ENCODE measurements at regions of chr7 and their contacts with region 1.

Region 1: DNA sequence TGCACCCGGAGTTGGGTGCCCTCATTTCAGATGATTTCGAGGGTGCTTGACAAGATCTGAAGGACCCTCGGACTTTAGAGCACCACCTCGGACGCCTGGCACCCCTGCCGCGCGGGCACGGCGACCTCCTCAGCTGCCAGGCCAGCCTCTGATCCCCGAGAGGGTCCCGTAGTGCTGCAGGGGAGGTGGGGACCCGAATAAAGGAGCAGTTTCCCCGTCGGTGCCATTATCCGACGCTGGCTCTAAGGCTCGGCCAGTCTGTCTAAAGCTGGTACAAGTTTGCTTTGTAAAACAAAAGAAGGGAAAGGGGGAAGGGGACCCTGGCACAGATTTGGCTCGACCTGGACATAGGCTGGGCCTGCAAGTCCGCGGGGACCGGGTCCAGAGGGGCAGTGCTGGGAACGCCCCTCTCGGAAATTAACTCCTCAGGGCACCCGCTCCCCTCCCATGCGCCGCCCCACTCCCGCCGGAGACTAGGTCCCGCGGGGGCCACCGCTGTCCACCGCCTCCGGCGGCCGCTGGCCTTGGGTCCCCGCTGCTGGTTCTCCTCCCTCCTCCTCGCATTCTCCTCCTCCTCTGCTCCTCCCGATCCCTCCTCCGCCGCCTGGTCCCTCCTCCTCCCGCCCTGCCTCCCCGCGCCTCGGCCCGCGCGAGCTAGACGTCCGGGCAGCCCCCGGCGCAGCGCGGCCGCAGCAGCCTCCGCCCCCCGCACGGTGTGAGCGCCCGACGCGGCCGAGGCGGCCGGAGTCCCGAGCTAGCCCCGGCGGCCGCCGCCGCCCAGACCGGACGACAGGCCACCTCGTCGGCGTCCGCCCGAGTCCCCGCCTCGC is at the start of gene EGFR:
- DNase-seq: peak; percentile 90
- H3K4me3 Mint-ChIP-seq: peak within 1 kb of the TSS; percentile 84
- H3K27ac Mint-ChIP-seq: peak within 1 kb of the TSS; percentile 84
- H3K4me1 Mint-ChIP-seq: peaks cover 37% of the 10 kb centered on the region
- H3K27me3 Mint-ChIP-seq: no peaks in the 10 kb centered on the region
- CTCF ChIP-seq: no peak
- total RNA-seq, gene EGFR: 85.3 and 87.4 TPM in 2 replicates

Region 2: GRCh38 chr7:54932818-54933543 is 85.6 kb before region 1 on chr7:
- CTCF ChIA-PET with region 1: no interaction called
- intact Hi-C with region 1: loop called (anchors 5 kb)
- DNase-seq: peak; percentile 81
- H3K4me3 Mint-ChIP-seq: peak overlapping the region; percentile 88
- H3K27ac Mint-ChIP-seq: peak overlapping the region; percentile 73
- H3K4me1 Mint-ChIP-seq: peaks cover 16% of the 10 kb centered on the region
- H3K27me3 Mint-ChIP-seq: no peaks in the 10 kb centered on the region
- CTCF ChIP-seq: no peak

Region 3: GRCh38 chr7:55073945-55074499 is 55.4 kb after region 1 on chr7:
- CTCF ChIA-PET with region 1: interaction called, 4 read pairs
- intact Hi-C with region 1: loop called (anchors 2 kb)
- DNase-seq: peak; percentile 93
- H3K4me3 Mint-ChIP-seq: peak overlapping the region; percentile 66
- H3K27ac Mint-ChIP-seq: peak overlapping the region; percentile 98
- H3K4me1 Mint-ChIP-seq: peaks cover 97% of the 10 kb centered on the region
- H3K27me3 Mint-ChIP-seq: no peaks in the 10 kb centered on the region
- CTCF ChIP-seq: no peak

Region 4: GRCh38 chr7:55120481-55121198 is 102.1 kb after region 1 on chr7:
- CTCF ChIA-PET with region 1: no interaction called
- intact Hi-C with region 1: no loop called
- DNase-seq: no peak
- H3K4me3 Mint-ChIP-seq: peak overlapping the region; percentile 5
- H3K27ac Mint-ChIP-seq: peak overlapping the region; percentile 73
- H3K4me1 Mint-ChIP-seq: peaks cover 49% of the 10 kb centered on the region
- H3K27me3 Mint-ChIP-seq: no peaks in the 10 kb centered on the region
- CTCF ChIP-seq: no peak

Region 5: DNA sequence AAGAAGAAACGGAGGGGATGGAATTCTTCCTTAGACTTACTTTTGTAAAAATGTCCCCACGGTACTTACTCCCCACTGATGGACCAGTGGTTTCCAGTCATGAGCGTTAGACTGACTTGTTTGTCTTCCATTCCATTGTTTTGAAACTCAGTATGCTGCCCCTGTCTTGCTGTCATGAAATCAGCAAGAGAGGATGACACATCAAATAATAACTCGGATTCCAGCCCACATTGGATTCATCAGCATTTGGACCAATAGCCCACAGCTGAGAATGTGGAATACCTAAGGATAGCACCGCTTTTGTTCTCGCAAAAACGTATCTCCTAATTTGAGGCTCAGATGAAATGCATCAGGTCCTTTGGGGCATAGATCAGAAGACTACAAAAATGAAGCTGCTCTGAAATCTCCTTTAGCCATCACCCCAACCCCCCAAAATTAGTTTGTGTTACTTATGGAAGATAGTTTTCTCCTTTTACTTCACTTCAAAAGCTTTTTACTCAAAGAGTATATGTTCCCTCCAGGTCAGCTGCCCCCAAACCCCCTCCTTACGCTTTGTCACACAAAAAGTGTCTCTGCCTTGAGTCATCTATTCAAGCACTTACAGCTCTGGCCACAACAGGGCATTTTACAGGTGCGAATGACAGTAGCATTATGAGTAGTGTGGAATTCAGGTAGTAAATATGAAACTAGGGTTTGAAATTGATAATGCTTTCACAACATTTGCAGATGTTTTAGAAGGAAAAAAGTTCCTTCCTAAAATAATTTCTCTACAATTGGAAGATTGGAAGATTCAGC is 187.9 kb after region 1 on chr7:
- CTCF ChIA-PET with region 1: no interaction called
- intact Hi-C with region 1: no loop called
- DNase-seq: no peak
- H3K4me3 Mint-ChIP-seq: no peak overlapping the region
- H3K27ac Mint-ChIP-seq: no peak overlapping the region
- H3K4me1 Mint-ChIP-seq: no peaks in the 10 kb centered on the region
- H3K27me3 Mint-ChIP-seq: no peaks in the 10 kb centered on the region
- CTCF ChIP-seq: no peak

Measured in Calu3 (cell line).